Right cardiac atrium (tissue), 5 donors: ENCODE measurements at regions of chr3 and their contacts with region 1.

Region 1: GRCh38 chr3:178436773-178437172 is 99.5 kb upstream of the KCNMB2 start:
- DNase-seq: no peak
- ATAC-seq: no peak
- H3K4me3 ChIP-seq: no peak overlapping the region
- H3K27ac ChIP-seq: no peak overlapping the region
- H3K4me1 ChIP-seq: no peaks in the 10 kb centered on the region
- H3K27me3 ChIP-seq: no peaks in the 10 kb centered on the region

Region 2: DNA sequence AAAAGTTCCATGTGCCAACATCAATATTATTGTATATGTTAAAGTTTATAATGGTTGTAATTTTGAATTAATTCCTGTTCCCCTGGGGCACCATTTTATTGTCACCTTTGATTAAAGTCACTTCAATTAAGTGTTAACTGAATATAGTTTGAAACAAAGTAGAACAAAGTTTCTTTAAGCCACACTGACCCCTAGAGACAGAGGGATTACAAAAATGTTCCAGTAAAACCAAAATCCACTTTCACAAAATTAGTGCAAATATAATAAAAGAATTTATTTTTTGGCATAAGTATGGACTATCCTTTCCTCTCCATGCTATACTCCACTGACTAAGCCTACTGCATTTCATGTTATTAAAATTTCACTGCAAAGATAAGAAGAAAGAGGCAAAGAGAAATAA is 511.0 kb after region 1 on chr3:
- intact Hi-C with region 1: loop called in 3 of 4 experiments (anchors 5 kb)
- DNase-seq: no peak
- ATAC-seq: no peak
- H3K4me3 ChIP-seq: no peak overlapping the region
- H3K27ac ChIP-seq: no peak overlapping the region
- H3K4me1 ChIP-seq: no peaks in the 10 kb centered on the region
- H3K27me3 ChIP-seq: no peaks in the 10 kb centered on the region

Region 3: GRCh38 chr3:178966299-178967176 is 529.8 kb after region 1 on chr3:
- intact Hi-C with region 1: loop called in 3 of 4 experiments (anchors 5 to 10 kb)
- DNase-seq: peak in 1 of 3 donors; percentile 36
- ATAC-seq: peak; percentile 28 to 48
- H3K4me3 ChIP-seq: peak overlapping the region; percentile 2
- H3K27ac ChIP-seq: no peak overlapping the region
- H3K4me1 ChIP-seq: no peaks in the 10 kb centered on the region
- H3K27me3 ChIP-seq: no peaks in the 10 kb centered on the region

Region 4: GRCh38 chr3:178971614-178972013 is 534.8 kb after region 1 on chr3:
- intact Hi-C with region 1: loop called in 3 of 4 experiments (anchors 5 to 10 kb)
- DNase-seq: no peak
- ATAC-seq: no peak
- H3K4me3 ChIP-seq: no peak overlapping the region
- H3K27ac ChIP-seq: no peak overlapping the region
- H3K4me1 ChIP-seq: no peaks in the 10 kb centered on the region
- H3K27me3 ChIP-seq: no peaks in the 10 kb centered on the region